Ascending aorta (tissue), 2 donors: ENCODE measurements at regions of chr1 and their contacts with region 1.

Region 1: DNA sequence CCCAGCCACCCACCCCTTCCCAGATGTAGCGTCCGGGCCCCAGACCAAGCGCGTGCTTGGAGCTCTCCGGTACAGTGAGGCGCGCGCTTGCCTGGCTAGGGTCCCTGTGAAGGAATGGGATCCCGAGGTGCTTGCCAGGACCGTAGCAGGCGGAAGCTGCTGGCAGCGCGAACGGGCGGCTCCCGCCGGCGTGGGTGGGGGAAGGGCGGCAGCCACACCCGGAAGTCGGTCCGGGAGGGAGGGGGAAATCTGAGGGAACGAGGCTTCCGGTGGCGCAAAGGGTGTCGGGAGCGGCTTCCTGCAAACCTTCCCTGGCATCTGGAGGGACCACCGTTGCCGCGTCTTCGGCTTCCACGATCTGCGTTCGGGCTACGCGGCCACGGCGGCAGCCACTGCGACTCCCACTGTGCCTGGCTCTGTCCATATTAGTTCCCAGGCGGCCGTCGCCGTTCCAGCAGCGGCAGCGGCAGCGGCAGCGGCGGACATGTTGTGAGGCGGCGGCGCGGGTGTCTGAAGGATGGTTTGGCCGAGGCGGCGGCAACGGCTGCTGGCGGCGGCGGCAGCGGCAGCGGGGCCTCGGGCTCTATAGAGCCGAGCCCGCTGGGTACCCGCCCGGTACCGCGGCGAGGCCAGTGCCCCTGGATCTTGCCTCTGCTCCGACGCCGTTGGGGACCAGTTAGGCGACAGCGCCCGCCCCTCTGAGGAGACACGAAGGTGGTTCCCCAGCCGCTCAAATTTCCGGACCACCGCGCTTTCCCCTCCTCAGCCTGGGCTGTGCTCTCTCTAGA is at the start of gene DR1:
- DNase-seq: peak; percentile 61 to 96
- H3K4me3 ChIP-seq: peak within 1 kb of the TSS; percentile 98 to 99
- H3K27ac ChIP-seq: peak within 1 kb of the TSS; percentile 95 to 98
- H3K4me1 ChIP-seq: peaks cover 0 to 9% of the 10 kb centered on the region in 2 donors
- H3K27me3 ChIP-seq: no peaks in the 10 kb centered on the region
- CTCF ChIP-seq: no peak
- total RNA-seq, gene DR1: 8.7 TPM

Region 2: DNA sequence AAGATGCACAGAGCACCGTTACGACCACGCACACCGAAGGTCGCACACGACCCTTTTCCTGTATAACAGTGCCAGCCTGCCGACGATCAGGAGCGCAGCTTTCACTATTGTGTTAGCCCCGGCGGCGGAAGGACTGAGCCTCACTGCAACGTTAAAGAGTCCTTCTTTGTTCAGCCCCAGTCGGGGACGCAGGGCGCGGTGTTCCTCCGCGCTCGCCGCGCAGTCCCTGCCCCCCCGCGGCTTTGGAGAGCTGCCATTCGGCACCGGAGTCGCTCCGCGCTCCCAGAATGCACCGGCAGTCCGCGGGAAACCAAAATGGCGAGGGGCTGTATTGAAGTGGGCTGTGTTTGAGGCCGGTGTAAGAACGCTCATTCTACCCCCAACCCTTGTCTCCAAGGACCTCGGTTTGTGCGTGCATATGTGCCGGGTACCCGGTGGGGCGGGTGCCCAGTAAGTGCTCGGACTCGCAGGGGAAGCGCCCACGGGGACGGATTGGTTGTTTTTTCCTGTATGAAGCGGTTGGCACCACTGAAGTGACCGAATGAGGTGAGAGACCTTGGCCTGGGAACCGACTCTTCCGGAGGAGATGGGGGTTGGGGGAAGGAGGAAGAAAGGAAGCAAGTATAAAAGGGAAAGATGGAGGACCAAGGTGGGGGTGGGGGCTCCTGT is 266.7 kb before region 1 on chr1 and contains the start of gene MTF2:
- intact Hi-C with region 1: loop called (anchors 1 kb)
- DNase-seq: peak; percentile 53 to 94
- H3K4me3 ChIP-seq: peak within 1 kb of the TSS; percentile 78 to 89
- H3K27ac ChIP-seq: peak within 1 kb of the TSS; percentile 23 to 56
- H3K4me1 ChIP-seq: peaks cover 0 to 16% of the 10 kb centered on the region in 2 donors
- H3K27me3 ChIP-seq: no peaks in the 10 kb centered on the region
- CTCF ChIP-seq: no peak
- total RNA-seq, gene MTF2: 2.3 TPM

Region 3: GRCh38 chr1:93219443-93219842 is 126.4 kb before region 1 on chr1:
- intact Hi-C with region 1: no loop called
- DNase-seq: no peak
- H3K4me3 ChIP-seq: no peak overlapping the region
- H3K27ac ChIP-seq: no peak overlapping the region
- H3K4me1 ChIP-seq: no peaks in the 10 kb centered on the region
- H3K27me3 ChIP-seq: no peaks in the 10 kb centered on the region
- CTCF ChIP-seq: no peak

Region 4: GRCh38 chr1:93304716-93305138 is 41.1 kb before region 1 on chr1:
- intact Hi-C with region 1: loop called (anchors 5 kb)
- DNase-seq: peak in 1 of 2 donors; percentile 69
- H3K4me3 ChIP-seq: no peak overlapping the region
- H3K27ac ChIP-seq: no peak overlapping the region
- H3K4me1 ChIP-seq: no peaks in the 10 kb centered on the region
- H3K27me3 ChIP-seq: no peaks in the 10 kb centered on the region
- CTCF ChIP-seq: peak; percentile 39 to 90 (median 84)

Region 5: GRCh38 chr1:93615582-93616150 is 269.8 kb after region 1 on chr1:
- intact Hi-C with region 1: loop called (anchors 10 kb)
- DNase-seq: no peak
- H3K4me3 ChIP-seq: no peak overlapping the region
- H3K27ac ChIP-seq: peak overlapping the region; percentile 83 to 87
- H3K4me1 ChIP-seq: peaks cover 19 to 49% of the 10 kb centered on the region in 2 donors
- H3K27me3 ChIP-seq: no peaks in the 10 kb centered on the region
- CTCF ChIP-seq: no peak

Region 6: DNA sequence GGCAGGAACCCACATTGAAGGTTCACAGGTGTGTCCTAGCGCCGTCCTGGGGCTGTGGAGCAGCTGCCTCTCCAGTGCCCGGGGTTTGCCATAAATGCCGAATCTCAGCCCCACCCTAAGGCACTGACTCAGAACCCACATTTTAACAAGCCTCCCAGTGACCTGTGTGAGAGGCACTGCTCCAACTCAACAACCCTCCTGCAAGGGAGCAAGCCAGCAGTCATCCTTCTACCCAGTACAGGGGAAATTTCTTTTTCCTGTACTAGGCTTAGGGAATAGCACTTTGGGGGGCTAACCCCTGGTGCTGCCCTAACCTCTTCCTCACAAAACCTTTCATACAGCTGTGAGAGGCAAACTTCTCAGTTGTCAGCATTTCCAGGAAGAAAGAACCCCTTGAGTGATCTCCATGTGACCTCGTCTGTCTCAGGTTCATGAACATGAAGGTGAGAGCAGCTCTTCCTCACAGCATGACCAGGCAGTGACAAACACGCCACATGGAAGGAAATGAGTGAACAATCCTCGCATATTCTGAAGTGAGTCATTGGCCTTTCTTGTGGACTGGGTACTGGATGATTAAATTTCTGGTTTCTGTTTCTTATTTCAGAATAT is 347.3 kb after region 1 on chr1:
- intact Hi-C with region 1: loop called (anchors 5 kb)
- DNase-seq: peak in 1 of 2 donors; percentile 80
- H3K4me3 ChIP-seq: peak overlapping the region in 1 of 2 donors; percentile 27
- H3K27ac ChIP-seq: peak overlapping the region; percentile 74 to 89
- H3K4me1 ChIP-seq: peaks cover 5 to 29% of the 10 kb centered on the region in 2 donors
- H3K27me3 ChIP-seq: no peaks in the 10 kb centered on the region
- CTCF ChIP-seq: no peak

Region 7: GRCh38 chr1:94417978-94418663 is 1072.3 kb after region 1 on chr1 and contains the start of gene ABCD3:
- intact Hi-C with region 1: loop called (anchors 10 kb)
- DNase-seq: peak; percentile 90 to 99
- H3K4me3 ChIP-seq: peak within 1 kb of the TSS; percentile 86 to 94
- H3K27ac ChIP-seq: peak within 1 kb of the TSS; percentile 86 to 90
- H3K4me1 ChIP-seq: peaks cover 0 to 11% of the 10 kb centered on the region in 2 donors
- H3K27me3 ChIP-seq: no peaks in the 10 kb centered on the region
- CTCF ChIP-seq: no peak
- total RNA-seq, gene ABCD3: 8.8 TPM